A673 (cell line): ENCODE measurements at regions of chr3 and their contacts with region 1.

Region 1: DNA sequence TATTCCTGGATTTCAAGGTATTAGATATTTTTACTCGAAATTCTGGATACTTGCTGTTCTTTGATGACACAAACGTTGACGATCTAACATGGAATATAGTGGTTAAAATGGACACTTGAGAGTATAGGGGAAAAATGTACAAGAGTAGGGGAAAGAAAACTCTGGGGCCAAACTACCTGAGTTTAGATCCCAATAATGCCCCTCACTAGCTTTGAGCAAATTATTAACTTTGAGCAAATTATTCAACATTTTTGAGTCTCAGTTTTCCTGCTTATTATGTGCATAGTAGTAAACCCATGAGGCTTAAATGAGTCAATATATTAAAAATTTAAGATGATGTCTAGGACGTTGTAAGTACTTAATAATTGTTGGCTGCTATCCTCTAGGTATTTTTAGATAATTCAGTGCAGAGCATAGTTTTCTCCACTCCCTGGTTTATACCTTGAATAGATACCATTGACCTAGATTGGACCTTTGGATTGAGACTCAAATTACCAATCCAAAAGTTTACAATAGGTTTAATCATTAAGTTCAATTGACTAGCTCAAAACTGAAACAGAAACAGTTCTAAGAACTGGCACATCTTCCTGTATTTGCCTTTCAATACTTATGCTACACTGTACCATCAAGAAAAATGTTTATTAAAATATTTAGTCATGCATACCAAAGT is 4.5 kb downstream of the ADGRG7 start:
- DNase-seq: no peak
- H3K4me3 ChIP-seq: no peak overlapping the region
- H3K27ac ChIP-seq: peak overlapping the region; percentile 98
- H3K4me1 ChIP-seq: peaks cover 64% of the 10 kb centered on the region
- H3K27me3 ChIP-seq: no peaks in the 10 kb centered on the region
- CTCF ChIP-seq: no peak

Region 2: DNA sequence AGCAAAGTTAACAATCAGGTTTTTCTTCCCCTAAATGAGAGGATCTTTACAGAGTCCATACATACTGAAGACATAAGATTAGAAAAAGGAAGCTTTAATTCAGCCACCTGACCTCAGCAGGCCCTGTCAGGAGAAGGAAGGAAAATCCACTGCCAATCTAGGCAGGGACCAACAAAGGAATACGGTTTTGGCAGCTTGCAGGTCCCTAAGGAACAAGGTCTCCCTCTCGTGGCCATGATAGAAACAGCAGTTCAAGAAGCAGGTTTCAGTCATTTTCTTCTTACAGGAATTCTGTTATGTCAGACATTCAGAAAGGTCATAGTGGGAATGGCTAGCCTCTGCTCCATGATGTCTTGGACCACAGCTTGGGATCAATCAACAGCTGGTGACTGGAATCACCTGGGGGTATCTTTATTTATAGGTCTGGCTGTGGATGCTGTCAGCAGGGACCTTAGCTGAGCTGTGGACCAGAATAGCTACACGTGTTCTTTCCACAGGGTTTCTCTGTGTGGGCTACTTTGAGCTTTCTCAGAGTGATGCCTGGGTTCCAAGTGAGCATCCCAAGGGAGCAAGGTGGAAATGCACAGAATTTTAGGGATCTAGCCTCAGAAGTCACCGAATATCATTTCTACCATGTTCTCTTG is 805.6 kb before region 1 on chr3:
- CTCF ChIA-PET with region 1: no interaction called
- POLR2A ChIA-PET with region 1: no interaction called
- intact Hi-C with region 1: no loop called
- DNase-seq: peak; percentile 76
- H3K4me3 ChIP-seq: no peak overlapping the region
- H3K27ac ChIP-seq: no peak overlapping the region
- H3K4me1 ChIP-seq: no peaks in the 10 kb centered on the region
- H3K27me3 ChIP-seq: no peaks in the 10 kb centered on the region
- CTCF ChIP-seq: peak; percentile 87

Region 3: DNA sequence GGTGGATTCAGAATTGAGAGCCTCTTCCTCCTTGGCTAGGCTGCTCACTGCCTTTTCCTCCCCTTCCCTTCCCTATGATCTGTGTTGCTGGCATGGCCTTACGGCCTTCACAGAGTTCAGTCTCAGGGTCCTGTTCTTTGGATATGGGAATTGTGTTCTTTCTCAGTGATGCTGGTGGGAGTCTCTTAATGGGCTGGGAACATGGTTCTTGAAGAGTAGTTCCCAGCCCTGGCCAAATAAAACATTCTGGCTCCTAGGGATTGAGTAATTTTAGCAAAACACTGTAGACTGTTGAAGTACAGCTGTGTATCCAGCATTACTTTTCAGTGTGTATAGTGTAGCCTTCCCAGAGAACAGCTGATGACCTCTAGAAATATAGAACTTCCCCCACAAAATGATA is 476.9 kb before region 1 on chr3:
- CTCF ChIA-PET with region 1: no interaction called
- POLR2A ChIA-PET with region 1: no interaction called
- intact Hi-C with region 1: no loop called
- DNase-seq: no peak
- H3K4me3 ChIP-seq: no peak overlapping the region
- H3K27ac ChIP-seq: no peak overlapping the region
- H3K4me1 ChIP-seq: no peaks in the 10 kb centered on the region
- H3K27me3 ChIP-seq: no peaks in the 10 kb centered on the region
- CTCF ChIP-seq: no peak

Region 4: GRCh38 chr3:100561459-100562158 is 52.2 kb before region 1 on chr3:
- CTCF ChIA-PET with region 1: no interaction called
- POLR2A ChIA-PET with region 1: no interaction called
- intact Hi-C with region 1: loop called (anchors 1 kb)
- DNase-seq: peak; percentile 75
- H3K4me3 ChIP-seq: peak overlapping the region; percentile 13
- H3K27ac ChIP-seq: peak overlapping the region; percentile 60
- H3K4me1 ChIP-seq: peaks cover 35% of the 10 kb centered on the region
- H3K27me3 ChIP-seq: no peaks in the 10 kb centered on the region
- CTCF ChIP-seq: no peak

Region 5: GRCh38 chr3:100710261-100710968 is 96.6 kb after region 1 on chr3:
- CTCF ChIA-PET with region 1: interaction called, 4 read pairs
- POLR2A ChIA-PET with region 1: no interaction called
- intact Hi-C with region 1: loop called (anchors 5 kb)
- DNase-seq: peak; percentile 84
- H3K4me3 ChIP-seq: peak overlapping the region; percentile 63
- H3K27ac ChIP-seq: peak overlapping the region; percentile 70
- H3K4me1 ChIP-seq: peaks cover 14% of the 10 kb centered on the region
- H3K27me3 ChIP-seq: no peaks in the 10 kb centered on the region
- CTCF ChIP-seq: peak; percentile 44; the same call in 1 of the 2 replicates

Region 6: DNA sequence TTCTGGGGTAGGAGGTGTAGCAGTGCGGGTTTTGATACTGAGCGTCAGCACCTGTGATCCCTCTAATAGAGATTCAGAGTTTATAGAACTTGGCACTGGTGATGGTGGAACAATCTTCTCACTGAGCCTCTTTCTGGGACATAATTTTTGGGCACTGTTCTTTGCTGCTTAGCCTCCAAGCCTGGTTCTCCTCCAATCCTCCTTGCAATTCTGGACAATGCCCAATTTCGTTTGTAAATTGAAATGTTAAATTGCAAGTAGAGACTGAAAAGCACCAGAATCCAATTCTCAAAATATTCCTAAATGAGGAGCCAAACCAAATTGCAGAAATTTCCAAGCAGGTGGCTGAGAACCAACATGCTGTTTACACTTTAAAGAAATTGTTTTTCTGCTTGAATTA is 529.2 kb after region 1 on chr3:
- CTCF ChIA-PET with region 1: no interaction called
- POLR2A ChIA-PET with region 1: no interaction called
- intact Hi-C with region 1: no loop called
- DNase-seq: no peak
- H3K4me3 ChIP-seq: no peak overlapping the region
- H3K27ac ChIP-seq: no peak overlapping the region
- H3K4me1 ChIP-seq: peaks cover 11% of the 10 kb centered on the region
- H3K27me3 ChIP-seq: peaks cover 76% of the 10 kb centered on the region
- CTCF ChIP-seq: no peak